ENCODE measurements at regions of chr4 and their contacts with region 1.

Region 1: DNA sequence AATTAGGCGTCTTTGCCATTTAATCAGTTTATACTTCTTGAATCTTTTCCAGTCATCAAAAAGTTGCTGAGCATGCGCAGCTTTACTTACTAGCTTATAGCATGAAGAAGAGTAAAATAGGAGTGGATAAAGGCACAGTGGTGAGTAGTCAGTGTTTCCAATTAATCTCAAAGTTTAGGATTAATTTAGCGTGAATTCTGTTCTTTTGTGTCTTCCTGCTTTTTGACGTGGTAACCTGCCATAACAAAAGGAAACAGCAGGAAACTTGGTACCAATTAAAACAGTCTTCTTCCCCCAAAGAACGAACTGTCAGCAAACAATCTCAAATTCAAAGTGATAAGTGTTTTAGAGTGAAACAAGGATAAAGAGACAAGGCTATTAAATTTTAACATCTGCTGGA is 61.9 kb downstream of the TET2 start:
- DNase-seq: no peak
- ATAC-seq: no peak
- H3K4me3 ChIP-seq: no peak overlapping the region
- H3K27ac ChIP-seq: no peak overlapping the region
- H3K4me1 ChIP-seq: peaks cover 0 to 8% (median 0%) of the 10 kb centered on the region in 9 donors
- H3K27me3 ChIP-seq: no peaks in the 10 kb centered on the region
- CTCF ChIP-seq: no peak

Region 2: GRCh38 chr4:105343146-105343931 is 134.8 kb after region 1 on chr4:
- intact Hi-C with region 1: no loop called
- DNase-seq: no peak
- ATAC-seq: no peak
- H3K4me3 ChIP-seq: peak overlapping the region in 3 of 10 donors; percentile 21 to 37 (median 23)
- H3K27ac ChIP-seq: no peak overlapping the region
- H3K4me1 ChIP-seq: peaks cover 0 to 18% (median 0%) of the 10 kb centered on the region in 9 donors
- H3K27me3 ChIP-seq: no peaks in the 10 kb centered on the region
- CTCF ChIP-seq: no peak

Region 3: GRCh38 chr4:105683038-105683437 is 474.5 kb after region 1 on chr4:
- intact Hi-C with region 1: loop called in 1 of 10 experiments (anchors 5 kb)
- DNase-seq: no peak
- ATAC-seq: no peak
- H3K4me3 ChIP-seq: no peak overlapping the region
- H3K27ac ChIP-seq: no peak overlapping the region
- H3K4me1 ChIP-seq: peaks cover 0 to 4% (median 0%) of the 10 kb centered on the region in 9 donors
- H3K27me3 ChIP-seq: no peaks in the 10 kb centered on the region
- CTCF ChIP-seq: no peak

Measured in heart right ventricle (tissue), 16 donors.